HEK293 (cell line): ENCODE measurements at regions of chr4 and their contacts with region 1.

Region 1: GRCh38 chr4:25144870-25145481 is 15.3 kb downstream of the SEPSECS start:
- H3K4me3 ChIP-seq: no peak overlapping the region
- H3K27ac ChIP-seq: no peak overlapping the region
- H3K4me1 ChIP-seq: no peaks in the 10 kb centered on the region
- CTCF ChIP-seq: no peak

Region 2: DNA sequence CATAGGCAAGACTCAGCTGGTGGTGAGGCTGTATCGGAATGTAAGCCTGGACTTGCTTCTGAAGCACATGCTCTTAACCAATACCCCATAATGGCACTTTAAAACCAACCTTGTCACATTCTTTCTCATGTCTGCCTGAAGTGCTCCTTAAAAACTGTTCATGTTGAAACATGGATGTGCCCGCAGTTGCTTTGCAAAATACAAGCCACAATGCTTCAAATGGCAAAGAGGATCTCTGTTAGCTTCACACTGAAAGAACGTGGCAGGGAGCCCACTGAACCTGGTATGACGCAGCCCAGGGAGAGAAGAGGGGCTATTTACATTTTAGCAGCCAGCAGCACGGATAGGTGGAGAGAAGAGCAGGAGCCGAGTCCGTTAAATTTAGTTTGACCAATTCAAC is 320.3 kb before region 1 on chr4:
- CTCF ChIA-PET with region 1: no interaction called
- POLR2A ChIA-PET with region 1: no interaction called
- H3K4me3 ChIP-seq: no peak overlapping the region
- H3K27ac ChIP-seq: no peak overlapping the region
- H3K4me1 ChIP-seq: no peaks in the 10 kb centered on the region
- CTCF ChIP-seq: no peak

Region 3: DNA sequence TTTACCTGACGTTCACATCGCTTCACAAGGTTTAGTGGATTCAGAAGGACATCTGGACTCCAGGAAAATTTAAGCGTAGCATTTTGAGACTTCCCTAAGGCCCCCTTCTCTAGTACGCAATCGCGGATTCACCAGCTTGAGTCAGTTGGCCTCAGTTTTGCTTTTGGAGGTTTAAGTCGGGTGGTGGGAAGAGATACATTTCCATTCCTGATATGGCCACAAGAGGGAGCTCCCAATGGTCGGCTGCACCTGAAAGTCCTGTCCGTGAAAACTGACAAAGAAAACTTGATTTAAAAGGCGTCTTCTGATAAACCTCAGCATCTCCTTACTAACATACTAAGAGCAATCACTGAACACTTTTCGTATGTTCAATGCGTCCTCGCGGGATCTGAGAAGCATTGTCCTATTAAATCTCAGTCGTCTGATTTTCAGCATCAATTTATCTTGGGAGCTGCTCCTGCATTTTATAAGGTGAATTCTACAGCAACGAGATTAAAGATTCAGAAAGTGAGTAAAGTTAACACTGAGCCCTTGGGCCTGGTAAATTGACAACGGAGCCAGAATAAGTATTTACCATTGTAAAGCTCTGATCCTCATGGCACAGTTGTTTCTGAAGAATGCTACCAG is 164.8 kb before region 1 on chr4:
- CTCF ChIA-PET with region 1: interaction called, 15 read pairs
- POLR2A ChIA-PET with region 1: no interaction called
- H3K4me3 ChIP-seq: no peak overlapping the region
- H3K27ac ChIP-seq: no peak overlapping the region
- H3K4me1 ChIP-seq: no peaks in the 10 kb centered on the region
- CTCF ChIP-seq: peak; percentile 42; the same call in 1 of the 2 replicates

Region 4: DNA sequence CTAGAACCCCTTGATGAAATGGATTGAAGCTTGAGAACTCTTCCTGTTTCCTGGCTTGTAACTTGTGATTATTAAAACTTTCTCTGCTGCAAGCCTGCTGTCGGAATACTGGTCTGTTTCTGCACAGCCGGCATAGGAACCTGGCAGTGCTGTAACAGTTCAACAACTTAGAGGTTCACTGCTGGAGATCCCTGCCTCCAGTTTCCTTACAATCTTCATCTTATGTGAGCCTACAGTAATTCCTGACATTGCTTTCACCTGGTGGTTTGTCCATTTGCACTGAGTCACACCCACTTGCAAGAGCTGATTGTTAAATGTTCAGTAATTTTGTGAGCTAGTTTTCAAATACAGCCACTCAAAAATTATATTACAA is 16.6 kb after region 1 on chr4:
- CTCF ChIA-PET with region 1: interaction called, 15 read pairs
- POLR2A ChIA-PET with region 1: no interaction called
- H3K4me3 ChIP-seq: peak overlapping the region; percentile 35; the same call in 1 of the 2 replicates
- H3K27ac ChIP-seq: no peak overlapping the region
- H3K4me1 ChIP-seq: no peaks in the 10 kb centered on the region
- CTCF ChIP-seq: no peak